ENCODE measurements at regions of chr3 and their contacts with region 1.

Region 1: GRCh38 chr3:4633078-4634004 is 140.2 kb downstream of the ITPR1 start:
- DNase-seq: no peak
- H3K4me3 ChIP-seq: no peak overlapping the region
- H3K27ac ChIP-seq: no peak overlapping the region
- H3K4me1 ChIP-seq: peaks cover 0 to 6% (median 0%) of the 10 kb centered on the region in 3 donors
- H3K27me3 ChIP-seq: no peaks in the 10 kb centered on the region
- CTCF ChIP-seq: peak; percentile 44 to 84 (median 72)
- POLR2A ChIP-seq: no peak

Region 2: GRCh38 chr3:4350789-4351163 is 282.6 kb before region 1 on chr3:
- intact Hi-C with region 1: loop called (anchors 5 kb)
- DNase-seq: peak; percentile 3
- H3K4me3 ChIP-seq: peak overlapping the region in 3 of 4 donors; percentile 11 to 46 (median 24)
- H3K27ac ChIP-seq: peak overlapping the region in 2 of 4 donors; percentile 36 to 37
- H3K4me1 ChIP-seq: peaks cover 0 to 7% (median 0%) of the 10 kb centered on the region in 3 donors
- H3K27me3 ChIP-seq: no peaks in the 10 kb centered on the region
- CTCF ChIP-seq: peak; percentile 49 to 82 (median 64)
- POLR2A ChIP-seq: no peak

Region 3: GRCh38 chr3:4493014-4493940 is 140.1 kb before region 1 on chr3 and contains the start of gene ITPR1:
- intact Hi-C with region 1: loop called (anchors 10 kb)
- DNase-seq: peak; percentile 99
- H3K4me3 ChIP-seq: peak within 1 kb of the TSS; percentile 45 to 86 (median 76)
- H3K27ac ChIP-seq: peak within 1 kb of the TSS; percentile 77 to 92 (median 86)
- H3K4me1 ChIP-seq: peaks cover 11 to 55% (median 13%) of the 10 kb centered on the region in 3 donors
- H3K27me3 ChIP-seq: peaks cover 0 to 13% (median 0%) of the 10 kb centered on the region in 4 donors
- CTCF ChIP-seq: no peak
- POLR2A ChIP-seq: peak in 3 of 4 donors; percentile 99 to 100 (median 99)
- total RNA-seq, gene ITPR1: 12.1 to 68.7 (median 25.6) TPM